Posterior cingulate gyrus (tissue), 11 donors: ENCODE measurements at regions of chr7 and their contacts with region 1.

Region 1: DNA sequence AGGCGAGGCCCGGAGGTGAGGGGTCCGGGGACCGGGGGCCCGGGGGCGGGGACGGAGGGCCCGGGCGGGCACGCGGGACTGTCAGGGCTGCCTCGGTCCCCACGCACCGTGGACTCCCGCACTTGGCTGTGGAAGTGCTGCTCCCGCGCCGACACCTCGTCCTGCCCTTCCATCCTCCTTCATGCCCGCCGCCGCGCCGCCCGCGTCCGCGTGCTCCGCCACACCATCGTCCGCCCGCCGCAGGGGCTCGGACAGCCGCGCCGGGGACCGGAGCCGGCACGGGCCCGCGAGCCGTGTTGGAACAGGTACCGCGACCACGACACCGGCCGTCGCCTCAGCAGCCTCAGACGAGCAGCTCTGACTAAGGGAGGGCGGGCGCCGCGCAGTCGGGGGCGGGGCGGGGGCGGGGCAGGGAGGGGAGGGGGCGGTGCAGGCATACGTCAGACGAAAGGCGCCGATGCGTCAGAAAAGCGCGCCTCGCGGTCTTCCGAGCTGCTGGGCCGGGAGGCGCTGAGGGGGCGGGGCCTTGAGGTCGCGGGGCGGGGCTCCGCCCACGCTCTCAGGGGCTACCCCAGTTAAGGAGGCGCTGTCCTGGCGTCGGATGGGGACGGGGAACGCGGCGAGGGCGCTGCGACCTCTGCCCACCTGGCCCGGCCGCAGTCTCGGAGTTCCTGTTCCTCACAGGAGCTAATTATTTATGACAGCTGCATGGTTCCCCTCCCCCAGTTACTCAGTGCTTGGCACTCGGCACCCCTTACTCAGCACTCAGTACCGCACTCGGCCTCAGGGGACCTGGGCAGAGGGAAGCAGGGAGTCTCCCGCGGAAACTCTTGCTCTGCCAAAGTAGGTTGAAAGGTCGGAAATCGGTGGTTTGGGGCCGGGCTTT is at the start of gene LMBR1:
- DNase-seq: peak; percentile 84 to 98 (median 90)

Region 2: GRCh38 chr7:156566812-156567549 is 326.1 kb before region 1 on chr7:
- intact Hi-C with region 1: no loop called
- DNase-seq: no peak

Region 3: GRCh38 chr7:156949541-156950380 is 56.7 kb after region 1 on chr7 and contains the start of gene NOM1:
- intact Hi-C with region 1: loop called (anchors 5 kb)
- DNase-seq: peak; percentile 77 to 98 (median 88)